MCF 10A (cell line): ENCODE measurements at regions of chr2 and their contacts with region 1.

Region 1: DNA sequence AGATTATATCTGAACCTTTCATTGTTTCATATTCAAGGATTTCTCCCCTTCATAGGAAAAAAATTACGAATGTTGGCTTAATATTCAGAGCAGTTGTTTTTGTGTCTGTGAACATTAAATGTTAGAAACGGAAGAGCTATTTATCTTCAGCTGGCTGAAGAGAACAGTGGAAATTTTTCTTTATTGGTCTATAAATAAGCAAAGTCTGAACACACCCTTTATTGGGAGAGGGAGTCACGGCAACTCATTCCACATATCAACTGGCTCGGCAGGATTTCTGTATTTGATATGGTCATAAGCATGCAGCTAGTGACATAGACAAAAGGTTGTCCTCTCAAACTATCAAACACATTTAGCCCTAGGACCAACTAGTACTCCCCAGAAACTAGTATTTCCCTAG is 468.4 kb upstream of the HNRNPA3 start:
- DNase-seq: no peak
- H3K4me3 Mint-ChIP-seq: no peak overlapping the region
- H3K27ac Mint-ChIP-seq: no peak overlapping the region
- H3K4me1 Mint-ChIP-seq: no peaks in the 10 kb centered on the region
- H3K27me3 Mint-ChIP-seq: peaks cover 11% of the 10 kb centered on the region
- CTCF ChIP-seq: no peak

Region 2: DNA sequence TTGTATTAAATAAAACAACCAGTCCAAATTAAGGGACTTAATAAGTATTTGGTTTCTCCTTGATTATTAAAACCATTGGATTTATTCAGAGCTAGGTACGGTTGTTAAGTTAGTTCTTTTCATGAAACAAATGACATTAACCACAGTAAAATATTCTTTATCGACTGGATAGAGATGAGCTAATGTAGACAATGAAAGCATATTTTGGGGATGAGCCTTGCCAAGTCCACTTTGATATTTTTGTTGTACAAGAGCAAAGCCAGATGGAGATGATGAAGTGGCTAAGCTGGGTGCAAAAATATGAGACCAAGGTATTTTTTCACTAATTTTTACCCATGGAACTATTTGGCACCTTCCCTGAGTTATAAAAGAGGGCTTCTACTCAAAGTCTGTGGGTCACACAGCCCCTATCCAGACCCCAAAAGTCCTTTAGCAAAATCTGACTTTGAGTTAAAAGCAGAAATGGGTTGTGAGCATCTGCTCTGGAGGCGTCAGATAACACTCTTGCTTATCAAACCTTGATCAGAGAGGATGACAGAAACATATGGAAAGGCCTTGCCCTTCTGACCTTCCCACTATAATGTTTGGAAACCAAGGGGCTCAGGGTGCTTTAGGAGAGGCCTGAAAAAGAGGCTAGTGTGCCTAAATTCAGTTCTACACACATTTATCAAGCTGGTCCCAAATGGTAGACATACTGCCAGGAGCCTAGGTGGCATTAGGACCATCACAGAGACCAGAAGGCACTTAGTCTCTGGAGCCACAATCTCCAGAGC is 18.1 kb before region 1 on chr2:
- CTCF ChIA-PET with region 1: no interaction called
- POLR2A ChIA-PET with region 1: no interaction called
- intact Hi-C with region 1: loop called (anchors 1 kb)
- DNase-seq: no peak
- H3K4me3 Mint-ChIP-seq: no peak overlapping the region
- H3K27ac Mint-ChIP-seq: no peak overlapping the region
- H3K4me1 Mint-ChIP-seq: peaks cover 10% of the 10 kb centered on the region
- H3K27me3 Mint-ChIP-seq: peaks cover 48% of the 10 kb centered on the region
- CTCF ChIP-seq: no peak